ENCODE measurements at regions of chr2 and their contacts with region 1.

Region 1: DNA sequence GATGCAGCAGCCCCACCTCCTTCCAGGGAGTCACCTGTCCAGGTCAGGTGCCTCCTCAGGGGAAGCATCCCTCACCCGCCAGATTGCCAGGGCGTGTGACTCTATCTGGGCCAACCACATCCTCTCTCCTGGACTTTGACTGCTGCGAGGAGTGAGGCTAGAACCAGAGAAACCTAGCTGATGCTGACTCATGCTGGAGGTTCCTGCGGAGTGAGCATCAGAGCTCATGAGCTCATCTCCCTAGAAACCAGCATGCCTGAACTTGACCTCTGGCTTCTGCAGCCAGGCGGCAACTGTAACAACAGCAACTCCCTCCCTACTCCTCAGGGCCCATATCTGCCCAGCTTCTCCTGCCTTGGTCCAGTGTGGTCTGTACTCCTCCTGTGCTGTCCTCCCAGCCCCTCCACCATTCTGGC is 28.3 kb upstream of the NT5DC4 start:
- DNase-seq: peak; percentile 82
- CTCF ChIP-seq: no peak

Region 2: GRCh38 chr2:111957872-111958354 is 734.6 kb before region 1 on chr2:
- CTCF ChIA-PET with region 1: no interaction called
- POLR2A ChIA-PET with region 1: no interaction called
- DNase-seq: no peak
- CTCF ChIP-seq: no peak

Region 3: GRCh38 chr2:112626604-112627059 is 65.9 kb before region 1 on chr2:
- CTCF ChIA-PET with region 1: interaction called, 43 read pairs
- POLR2A ChIA-PET with region 1: no interaction called
- DNase-seq: peak; percentile 70
- CTCF ChIP-seq: peak; percentile 93

Region 4: DNA sequence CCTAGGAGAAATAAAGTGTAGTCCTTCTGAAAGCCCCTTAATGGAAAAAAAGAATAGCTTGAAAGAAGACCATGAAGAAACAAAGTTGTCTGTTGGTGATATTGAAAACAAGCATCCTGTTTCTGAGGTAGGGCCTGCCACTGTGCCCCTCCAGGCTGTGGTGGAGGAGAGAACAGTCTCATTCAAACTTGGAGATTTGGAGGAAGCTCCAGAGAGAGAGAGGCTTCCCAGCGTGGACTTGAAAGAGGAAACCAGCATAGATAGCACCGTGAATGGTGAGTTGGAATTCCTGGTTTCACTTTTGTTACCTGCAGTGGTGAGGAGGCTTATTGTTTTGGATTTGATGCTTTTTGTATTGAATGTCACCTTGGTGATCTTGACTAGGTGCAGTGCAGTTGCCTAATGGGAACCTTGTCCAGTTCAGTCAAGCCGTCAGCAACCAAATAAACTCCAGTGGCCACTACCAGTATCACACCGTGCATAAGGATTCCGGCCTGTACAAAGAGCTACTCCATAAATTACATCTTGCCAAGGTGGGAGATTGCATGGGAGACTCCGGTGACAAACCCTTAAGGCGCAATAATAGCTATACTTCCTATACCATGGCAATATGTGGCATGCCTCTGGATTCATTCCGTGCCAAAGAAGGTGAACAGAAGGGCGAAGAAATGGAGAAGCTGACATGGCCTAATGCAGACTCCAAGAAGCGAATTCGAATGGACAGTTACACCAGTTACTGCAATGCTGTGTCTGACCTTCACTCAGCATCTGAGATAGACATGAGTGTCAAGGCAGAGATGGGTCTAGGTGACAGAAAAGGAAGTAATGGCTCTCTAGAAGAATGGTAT is 33.5 kb before region 1 on chr2:
- CTCF ChIA-PET with region 1: interaction called, 10 read pairs
- POLR2A ChIA-PET with region 1: interaction called, 6 read pairs
- DNase-seq: no peak
- CTCF ChIP-seq: no peak

Region 5: DNA sequence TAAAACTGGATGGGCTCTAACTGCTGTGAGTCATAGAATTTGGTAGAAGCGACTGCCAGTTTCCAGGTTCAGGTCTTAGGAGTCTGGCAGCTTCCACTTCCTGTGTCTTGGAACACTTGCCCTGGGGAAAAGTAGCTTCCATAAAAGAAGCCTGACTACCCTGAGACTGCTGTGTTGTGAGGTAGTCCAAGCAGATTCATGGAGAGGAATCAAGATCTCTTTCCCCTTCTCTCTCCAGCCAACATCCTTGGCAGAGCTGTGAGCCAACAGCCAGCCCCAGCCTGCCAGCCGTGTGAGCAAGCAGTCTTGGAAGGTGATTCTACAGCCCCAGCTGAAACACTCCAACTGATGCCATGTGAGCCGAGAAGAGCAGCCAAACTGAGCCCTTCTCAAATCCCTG is 13.0 kb before region 1 on chr2:
- CTCF ChIA-PET with region 1: interaction called, 67 read pairs
- POLR2A ChIA-PET with region 1: no interaction called
- DNase-seq: no peak
- CTCF ChIP-seq: no peak

Region 6: GRCh38 chr2:112768432-112768831 is 75.9 kb after region 1 on chr2:
- CTCF ChIA-PET with region 1: no interaction called
- POLR2A ChIA-PET with region 1: no interaction called
- DNase-seq: no peak
- CTCF ChIP-seq: no peak

Region 7: GRCh38 chr2:113156278-113157117 is 464.0 kb after region 1 on chr2:
- CTCF ChIA-PET with region 1: no interaction called
- POLR2A ChIA-PET with region 1: no interaction called
- DNase-seq: no peak
- CTCF ChIP-seq: no peak